CD8-positive, alpha-beta T cell (primary cell): ENCODE measurements at regions of chr1 and their contacts with region 1.

Region 1: DNA sequence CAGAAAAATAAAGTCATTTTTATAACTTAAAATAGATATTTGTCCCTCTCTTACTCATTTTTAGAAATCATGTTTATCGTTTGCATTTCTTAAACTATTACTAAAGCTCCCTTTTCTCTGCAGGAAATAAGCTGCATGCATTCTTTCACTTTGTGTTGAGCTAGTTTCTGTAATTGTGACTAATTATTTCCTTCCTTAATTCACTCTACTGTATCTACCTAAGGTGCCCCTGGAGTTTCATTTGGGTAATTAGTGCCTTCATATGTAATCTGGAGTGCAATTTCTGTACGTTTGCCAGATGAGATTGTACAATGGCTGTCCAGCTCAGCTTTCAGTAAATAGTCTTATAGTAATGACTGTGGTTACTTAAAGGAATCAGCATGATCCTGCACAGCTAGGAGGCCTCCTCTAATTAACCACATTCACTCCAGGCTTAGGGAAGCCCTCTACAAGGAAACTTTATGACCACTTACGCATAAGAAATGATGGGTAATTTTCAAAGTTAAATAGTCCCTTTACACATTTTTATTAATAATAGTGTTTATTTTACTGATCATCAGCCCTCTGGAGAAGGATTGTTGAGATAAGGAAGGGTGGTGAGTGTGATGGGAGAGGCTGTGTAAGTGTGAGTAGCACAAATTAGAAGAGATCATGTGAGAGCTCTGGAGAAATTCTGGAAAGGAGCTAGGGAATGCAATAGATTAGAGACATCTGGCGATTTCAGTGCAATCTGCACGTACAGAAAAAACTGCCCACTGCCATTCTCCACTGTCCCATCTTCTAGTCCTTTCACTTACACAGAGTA is 86.8 kb downstream of the LRRC8C start:
- DNase-seq: peak in 2 of 9 experiments; percentile 42 to 67
- ATAC-seq: peak; percentile 68
- H3K4me3 ChIP-seq: no peak overlapping the region
- H3K4me3 Mint-ChIP-seq: peak overlapping the region; percentile 22
- H3K27ac ChIP-seq: peak overlapping the region in 1 of 2 experiments; percentile 65
- H3K27ac Mint-ChIP-seq: peak overlapping the region; percentile 91
- H3K4me1 ChIP-seq: peaks cover 63% of the 10 kb centered on the region
- H3K4me1 Mint-ChIP-seq: peaks cover 80% of the 10 kb centered on the region
- H3K27me3 ChIP-seq: no peaks in the 10 kb centered on the region
- H3K27me3 Mint-ChIP-seq: no peaks in the 10 kb centered on the region
- CTCF ChIP-seq: no peak

Region 2: GRCh38 chr1:89657886-89658285 is 61.8 kb before region 1 on chr1:
- CTCF ChIA-PET with region 1: interaction called, 3 read pairs
- POLR2A ChIA-PET with region 1: no interaction called
- intact Hi-C with region 1: loop called in 1 of 2 experiments (anchors 2 kb)
- DNase-seq: peak in 3 of 9 experiments; percentile 47 to 87 (median 75)
- ATAC-seq: peak; percentile 74
- H3K4me3 ChIP-seq: no peak overlapping the region
- H3K4me3 Mint-ChIP-seq: peak overlapping the region; percentile 51
- H3K27ac ChIP-seq: peak overlapping the region; percentile 21 to 58
- H3K27ac Mint-ChIP-seq: peak overlapping the region; percentile 88
- H3K4me1 ChIP-seq: peaks cover 73% of the 10 kb centered on the region
- H3K4me1 Mint-ChIP-seq: peaks cover 92% of the 10 kb centered on the region
- H3K27me3 ChIP-seq: no peaks in the 10 kb centered on the region
- H3K27me3 Mint-ChIP-seq: no peaks in the 10 kb centered on the region
- CTCF ChIP-seq: no peak

Region 3: DNA sequence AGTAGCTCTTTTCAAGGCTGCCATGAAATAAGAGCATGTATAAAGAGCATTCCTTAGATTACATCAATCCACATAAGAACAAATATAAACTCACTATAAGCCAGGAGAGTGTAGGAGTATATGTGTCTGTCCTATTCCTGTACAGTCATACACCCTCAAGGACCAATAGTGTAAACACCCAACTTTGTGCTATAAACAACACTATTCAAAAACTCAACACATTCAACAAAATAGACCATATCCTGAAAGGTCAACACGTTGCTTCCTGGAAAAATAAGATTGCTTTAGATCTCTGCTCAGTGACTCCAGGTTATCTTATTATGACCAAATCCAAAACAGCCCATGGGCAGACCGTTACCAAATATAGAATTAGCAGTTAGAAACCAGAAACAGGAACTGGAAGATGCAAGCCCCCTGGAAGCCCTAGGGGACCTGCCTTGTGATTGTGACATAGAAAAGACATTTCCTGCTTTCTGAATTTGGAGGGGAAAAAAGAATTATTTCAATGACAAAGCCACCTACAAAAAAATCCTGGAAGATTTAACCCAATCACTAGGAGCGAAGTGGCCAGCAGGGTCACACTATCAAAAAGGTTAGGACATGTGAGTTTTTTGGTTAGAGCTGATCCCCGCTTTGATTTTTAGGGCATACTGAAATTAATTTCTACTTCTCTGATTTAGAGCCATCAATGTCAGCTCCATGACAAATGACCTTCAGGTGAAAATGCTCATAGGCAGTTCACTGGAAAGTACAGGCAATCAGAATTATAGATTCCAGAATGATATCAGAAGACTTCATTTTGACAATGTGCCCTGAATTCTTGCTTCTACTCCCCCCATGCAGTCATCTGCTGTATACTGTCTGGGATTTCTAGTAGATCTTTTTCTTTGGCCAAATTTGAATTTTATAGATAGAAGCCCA is 26.8 kb before region 1 on chr1:
- CTCF ChIA-PET with region 1: no interaction called
- POLR2A ChIA-PET with region 1: no interaction called
- intact Hi-C with region 1: loop called in 1 of 2 experiments (anchors 2 kb)
- DNase-seq: no peak
- ATAC-seq: no peak
- H3K4me3 ChIP-seq: no peak overlapping the region
- H3K4me3 Mint-ChIP-seq: no peak overlapping the region
- H3K27ac ChIP-seq: peak overlapping the region in 1 of 2 experiments; percentile 41
- H3K27ac Mint-ChIP-seq: peak overlapping the region; percentile 89
- H3K4me1 ChIP-seq: peaks cover 52% of the 10 kb centered on the region
- H3K4me1 Mint-ChIP-seq: peaks cover 83% of the 10 kb centered on the region
- H3K27me3 ChIP-seq: no peaks in the 10 kb centered on the region
- H3K27me3 Mint-ChIP-seq: no peaks in the 10 kb centered on the region
- CTCF ChIP-seq: no peak

Region 4: DNA sequence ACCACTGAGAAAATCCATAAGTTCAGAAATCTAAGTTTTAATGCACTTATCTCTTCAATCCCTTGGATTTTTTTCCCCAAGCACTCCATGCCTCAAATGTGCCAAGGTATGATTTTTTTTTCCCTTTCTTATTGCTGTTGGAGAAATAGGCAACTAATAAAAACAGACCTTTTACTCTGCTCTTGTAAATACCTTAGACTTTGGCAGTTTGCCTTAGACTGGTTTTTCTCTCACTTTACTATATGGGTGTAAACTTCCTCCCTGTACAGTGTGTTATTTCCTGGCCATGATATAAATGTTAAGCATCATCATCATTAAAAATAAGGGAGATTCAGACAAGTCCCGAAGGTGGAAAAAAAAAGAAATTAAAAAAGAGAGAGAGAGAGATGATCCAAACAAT is 21.1 kb before region 1 on chr1:
- CTCF ChIA-PET with region 1: no interaction called
- POLR2A ChIA-PET with region 1: interaction called, 3 read pairs
- intact Hi-C with region 1: loop called in 1 of 2 experiments (anchors 2 kb)
- DNase-seq: peak in 2 of 9 experiments; percentile 34 to 62
- ATAC-seq: peak; percentile 37
- H3K4me3 ChIP-seq: no peak overlapping the region
- H3K4me3 Mint-ChIP-seq: peak overlapping the region; percentile 73
- H3K27ac ChIP-seq: peak overlapping the region; percentile 28 to 69
- H3K27ac Mint-ChIP-seq: peak overlapping the region; percentile 93
- H3K4me1 ChIP-seq: peaks cover 68% of the 10 kb centered on the region
- H3K4me1 Mint-ChIP-seq: peaks cover 88% of the 10 kb centered on the region
- H3K27me3 ChIP-seq: no peaks in the 10 kb centered on the region
- H3K27me3 Mint-ChIP-seq: no peaks in the 10 kb centered on the region
- CTCF ChIP-seq: no peak

Region 5: GRCh38 chr1:89706700-89707012 is 13.0 kb before region 1 on chr1:
- CTCF ChIA-PET with region 1: no interaction called
- POLR2A ChIA-PET with region 1: interaction called, 6 read pairs
- intact Hi-C with region 1: loop called in 1 of 2 experiments (anchors 1 kb)
- DNase-seq: no peak
- ATAC-seq: no peak
- H3K4me3 ChIP-seq: no peak overlapping the region
- H3K4me3 Mint-ChIP-seq: no peak overlapping the region
- H3K27ac ChIP-seq: no peak overlapping the region
- H3K27ac Mint-ChIP-seq: no peak overlapping the region
- H3K4me1 ChIP-seq: peaks cover 6% of the 10 kb centered on the region
- H3K4me1 Mint-ChIP-seq: peaks cover 59% of the 10 kb centered on the region
- H3K27me3 ChIP-seq: no peaks in the 10 kb centered on the region
- H3K27me3 Mint-ChIP-seq: no peaks in the 10 kb centered on the region
- CTCF ChIP-seq: no peak

Region 6: GRCh38 chr1:89739013-89739843 is 19.5 kb after region 1 on chr1:
- CTCF ChIA-PET with region 1: interaction called, 3 read pairs
- POLR2A ChIA-PET with region 1: interaction called, 3 read pairs
- intact Hi-C with region 1: loop called in 1 of 2 experiments (anchors 2 kb)
- DNase-seq: peak in 2 of 9 experiments; percentile 43 to 51
- ATAC-seq: peak; percentile 56
- H3K4me3 ChIP-seq: no peak overlapping the region
- H3K4me3 Mint-ChIP-seq: peak overlapping the region; percentile 13
- H3K27ac ChIP-seq: peak overlapping the region in 1 of 2 experiments; percentile 58
- H3K27ac Mint-ChIP-seq: peak overlapping the region; percentile 77
- H3K4me1 ChIP-seq: peaks cover 14% of the 10 kb centered on the region
- H3K4me1 Mint-ChIP-seq: peaks cover 35% of the 10 kb centered on the region
- H3K27me3 ChIP-seq: no peaks in the 10 kb centered on the region
- H3K27me3 Mint-ChIP-seq: no peaks in the 10 kb centered on the region
- CTCF ChIP-seq: no peak

Region 7: DNA sequence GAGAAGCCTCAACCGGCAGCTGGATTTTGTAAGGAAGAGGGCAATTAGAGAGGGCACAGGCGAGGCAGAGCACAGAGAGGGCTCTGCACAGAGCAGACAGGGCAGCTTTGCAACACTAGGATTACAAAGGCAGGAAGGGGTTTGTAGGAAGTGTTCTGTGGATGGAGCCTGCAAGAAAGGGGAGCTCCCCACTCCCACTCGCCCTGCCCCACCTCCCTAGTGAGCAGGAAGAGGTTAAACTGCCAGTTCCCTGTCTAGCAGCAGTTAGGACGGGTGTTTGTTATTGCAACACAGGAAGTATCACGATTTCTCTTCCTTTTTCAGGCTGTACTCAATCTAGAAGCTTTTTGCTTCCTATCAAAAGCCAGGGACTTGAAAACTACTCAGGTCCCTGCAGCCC is 37.8 kb after region 1 on chr1:
- CTCF ChIA-PET with region 1: interaction called, 36 read pairs
- POLR2A ChIA-PET with region 1: interaction called, 8 read pairs
- intact Hi-C with region 1: loop called in 1 of 2 experiments (anchors 5 kb)
- DNase-seq: peak in 8 of 9 experiments; percentile 13 to 73 (median 38)
- ATAC-seq: peak; percentile 68
- H3K4me3 ChIP-seq: peak overlapping the region; percentile 2 to 32
- H3K4me3 Mint-ChIP-seq: peak overlapping the region; percentile 74
- H3K27ac ChIP-seq: peak overlapping the region; percentile 11 to 67
- H3K27ac Mint-ChIP-seq: peak overlapping the region; percentile 92
- H3K4me1 ChIP-seq: peaks cover 74% of the 10 kb centered on the region
- H3K4me1 Mint-ChIP-seq: peaks cover 88% of the 10 kb centered on the region
- H3K27me3 ChIP-seq: no peaks in the 10 kb centered on the region
- H3K27me3 Mint-ChIP-seq: no peaks in the 10 kb centered on the region
- CTCF ChIP-seq: no peak